Common myeloid progenitor, CD34-positive (primary cell): ENCODE measurements at regions of chr11 and their contacts with region 1.

Region 1: GRCh38 chr11:68297812-68298658 is 14.4 kb upstream of the LRP5 start:
- DNase-seq: peak; percentile 68 to 77 (median 74)
- H3K4me3 ChIP-seq: peak overlapping the region in 2 of 7 experiments; percentile 11 to 45
- H3K27ac ChIP-seq: no peak overlapping the region
- H3K4me1 ChIP-seq: peaks cover 0 to 19% (median 17%) of the 10 kb centered on the region in 4 experiments
- H3K27me3 ChIP-seq: no peaks in the 10 kb centered on the region

Region 2: DNA sequence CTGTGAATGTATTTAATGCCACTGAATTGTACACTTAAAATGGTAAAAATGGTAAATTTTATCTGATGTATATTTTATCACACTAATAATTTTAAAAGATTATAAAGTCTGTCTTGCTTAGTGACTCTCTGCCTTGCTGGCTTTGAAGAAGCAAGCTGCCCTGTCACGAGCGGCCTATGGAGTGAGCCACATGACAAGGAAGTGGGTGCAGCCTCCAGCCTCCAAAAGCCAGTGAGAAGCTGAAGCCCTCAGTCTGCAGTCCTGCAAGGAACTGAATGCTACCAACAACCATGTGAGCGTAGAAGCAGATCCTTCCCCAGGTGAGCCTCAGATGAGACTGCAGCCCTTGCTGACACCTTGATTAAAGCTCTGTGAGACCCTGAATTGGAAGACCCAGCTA is 46.3 kb before region 1 on chr11:
- CTCF ChIA-PET with region 1: interaction called, 188 read pairs
- POLR2A ChIA-PET with region 1: no interaction called
- DNase-seq: no peak
- H3K4me3 ChIP-seq: no peak overlapping the region
- H3K27ac ChIP-seq: no peak overlapping the region
- H3K4me1 ChIP-seq: no peaks in the 10 kb centered on the region
- H3K27me3 ChIP-seq: no peaks in the 10 kb centered on the region

Region 3: DNA sequence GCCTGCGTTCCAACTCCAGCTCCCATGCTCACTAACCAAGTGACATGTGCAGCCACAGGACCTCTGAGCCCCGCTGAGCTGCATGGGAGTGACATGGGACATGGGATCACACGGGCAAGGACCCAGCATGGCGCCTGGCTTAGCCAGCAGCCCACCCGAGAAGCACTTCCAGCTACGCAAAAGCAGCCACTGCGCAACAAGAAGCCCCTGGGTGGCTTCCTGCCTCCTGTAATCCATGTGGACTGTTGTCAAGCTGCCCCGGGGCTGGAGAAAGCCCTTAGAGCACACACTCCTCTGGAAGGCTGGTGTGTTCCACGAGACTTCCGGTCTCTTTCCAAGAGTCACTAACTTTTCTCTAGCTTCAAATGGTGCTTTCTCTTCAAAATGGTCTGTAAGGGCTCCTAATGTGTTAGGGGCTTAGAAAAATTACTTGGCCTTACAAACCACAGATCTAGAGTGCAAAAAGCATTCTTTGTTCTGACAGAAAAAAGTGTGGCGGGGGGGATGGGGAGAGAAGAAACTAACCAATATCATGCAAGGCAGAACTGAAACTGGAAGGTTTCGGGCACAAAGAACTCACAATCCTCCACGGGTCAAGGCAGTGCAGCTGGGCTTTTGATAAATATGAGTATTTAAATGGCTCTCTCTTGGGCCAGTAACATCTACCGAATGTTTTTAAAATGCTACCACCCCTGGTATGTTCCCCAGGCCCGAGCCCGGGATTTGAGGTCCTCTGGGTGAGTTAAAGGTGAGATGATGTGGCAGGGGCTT is 31.7 kb before region 1 on chr11:
- CTCF ChIA-PET with region 1: interaction called, 188 read pairs
- POLR2A ChIA-PET with region 1: interaction called, 4 read pairs
- DNase-seq: no peak
- H3K4me3 ChIP-seq: no peak overlapping the region
- H3K27ac ChIP-seq: no peak overlapping the region
- H3K4me1 ChIP-seq: peaks cover 4 to 10% (median 9%) of the 10 kb centered on the region in 4 experiments
- H3K27me3 ChIP-seq: no peaks in the 10 kb centered on the region

Region 4: GRCh38 chr11:68282141-68282970 is 15.7 kb before region 1 on chr11:
- CTCF ChIA-PET with region 1: interaction called, 33 read pairs
- POLR2A ChIA-PET with region 1: no interaction called
- DNase-seq: peak; percentile 80 to 90 (median 82)
- H3K4me3 ChIP-seq: peak overlapping the region in 5 of 7 experiments; percentile 24 to 72 (median 39)
- H3K27ac ChIP-seq: peak overlapping the region in 1 of 2 experiments; percentile 38
- H3K4me1 ChIP-seq: peaks cover 10 to 23% (median 17%) of the 10 kb centered on the region in 4 experiments
- H3K27me3 ChIP-seq: no peaks in the 10 kb centered on the region

Region 5: DNA sequence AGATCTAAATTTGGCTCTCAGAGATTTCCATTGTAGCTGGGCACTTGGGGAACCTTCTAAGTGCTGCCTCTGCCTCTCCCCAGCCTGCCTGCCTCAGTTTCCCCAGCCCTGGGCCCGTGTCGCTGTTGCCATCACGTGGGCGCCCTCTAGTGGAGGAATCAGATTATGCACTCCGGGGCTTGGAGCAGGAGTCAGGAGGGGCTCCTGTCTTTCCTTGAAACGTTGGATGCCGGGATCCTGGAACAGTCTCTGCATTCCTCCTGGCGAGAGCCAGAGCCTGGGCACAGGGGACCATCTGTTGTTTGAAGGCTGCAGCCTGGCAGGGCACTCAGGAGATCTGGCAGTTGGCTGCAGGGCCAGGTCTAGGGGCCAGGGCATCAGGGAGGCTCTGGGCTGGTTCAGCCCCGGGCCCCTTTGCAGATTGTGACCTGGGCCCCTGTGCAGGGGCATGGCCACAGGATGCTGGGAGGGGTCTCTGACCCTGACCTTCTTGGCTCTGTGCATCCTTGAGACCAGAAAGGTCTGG is 86.0 kb after region 1 on chr11:
- CTCF ChIA-PET with region 1: interaction called, 16 read pairs
- POLR2A ChIA-PET with region 1: no interaction called
- DNase-seq: peak; percentile 27 to 57 (median 53)
- H3K4me3 ChIP-seq: no peak overlapping the region
- H3K27ac ChIP-seq: no peak overlapping the region
- H3K4me1 ChIP-seq: peaks cover 4 to 36% (median 33%) of the 10 kb centered on the region in 4 experiments
- H3K27me3 ChIP-seq: no peaks in the 10 kb centered on the region